Right cardiac atrium (tissue), 5 donors: ENCODE measurements at regions of chr10 and their contacts with region 1.

Region 1: GRCh38 chr10:89029785-89030437 is 39.3 kb downstream of the FAS start:
- DNase-seq: peak; percentile 79 to 88 (median 83)
- ATAC-seq: peak; percentile 66 to 79
- H3K4me3 ChIP-seq: no peak overlapping the region
- H3K27ac ChIP-seq: no peak overlapping the region
- H3K4me1 ChIP-seq: peaks cover 3% of the 10 kb centered on the region
- H3K27me3 ChIP-seq: no peaks in the 10 kb centered on the region

Region 2: GRCh38 chr10:89210794-89211425 is 181.0 kb after region 1 on chr10:
- intact Hi-C with region 1: loop called (anchors 2 kb)
- DNase-seq: no peak
- ATAC-seq: no peak
- H3K4me3 ChIP-seq: no peak overlapping the region
- H3K27ac ChIP-seq: no peak overlapping the region
- H3K4me1 ChIP-seq: peaks cover 3% of the 10 kb centered on the region
- H3K27me3 ChIP-seq: no peaks in the 10 kb centered on the region

Region 3: DNA sequence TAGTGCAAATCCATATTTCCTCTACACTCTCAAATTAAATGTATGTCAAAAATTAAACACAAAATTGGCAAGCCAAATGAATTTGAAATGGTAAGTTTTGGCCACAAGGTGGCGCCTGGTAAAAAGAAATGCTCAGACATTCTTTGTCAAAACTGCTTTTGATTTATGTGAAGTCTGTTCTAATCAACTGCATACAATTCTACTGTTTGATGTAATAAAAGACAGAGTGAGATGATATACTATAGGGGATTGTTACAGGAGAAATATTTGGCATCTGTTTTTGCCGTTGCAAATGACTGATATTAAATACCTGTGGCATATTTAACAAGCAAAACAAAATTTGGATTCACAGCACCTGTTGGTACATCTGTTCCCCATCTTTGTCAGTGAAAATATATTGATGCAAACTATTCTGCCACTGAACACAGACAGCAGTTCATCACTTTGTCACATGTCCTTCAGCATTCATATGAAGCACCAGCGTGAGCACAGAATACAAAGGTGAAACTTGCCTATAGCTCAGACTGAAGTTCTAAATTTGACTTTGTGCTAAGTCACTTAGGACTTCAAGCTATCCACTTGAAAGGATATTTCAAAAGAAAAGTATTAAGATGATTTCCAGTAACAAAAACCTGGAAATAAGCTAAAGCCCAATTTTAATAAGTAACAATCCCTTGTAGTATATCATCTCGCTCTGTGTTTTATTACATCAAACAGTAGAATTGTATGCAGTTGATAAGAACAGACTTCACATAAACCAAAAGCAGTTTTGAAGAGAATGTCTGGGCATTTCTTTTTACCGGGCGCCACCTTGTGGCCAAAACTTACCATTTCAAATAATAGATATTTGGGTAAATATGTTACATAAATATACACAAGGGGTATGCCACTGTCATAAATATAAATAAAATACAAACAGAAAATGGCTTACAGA is 187.4 kb after region 1 on chr10:
- intact Hi-C with region 1: loop called in 3 of 4 experiments (anchors 2 kb)
- DNase-seq: peak in 2 of 3 donors; percentile 33 to 76
- ATAC-seq: peak in 1 of 2 donors; percentile 29
- H3K4me3 ChIP-seq: no peak overlapping the region
- H3K27ac ChIP-seq: peak overlapping the region; percentile 68
- H3K4me1 ChIP-seq: peaks cover 2% of the 10 kb centered on the region
- H3K27me3 ChIP-seq: no peaks in the 10 kb centered on the region